ENCODE measurements at regions of chr4 and their contacts with region 1.

Region 1: DNA sequence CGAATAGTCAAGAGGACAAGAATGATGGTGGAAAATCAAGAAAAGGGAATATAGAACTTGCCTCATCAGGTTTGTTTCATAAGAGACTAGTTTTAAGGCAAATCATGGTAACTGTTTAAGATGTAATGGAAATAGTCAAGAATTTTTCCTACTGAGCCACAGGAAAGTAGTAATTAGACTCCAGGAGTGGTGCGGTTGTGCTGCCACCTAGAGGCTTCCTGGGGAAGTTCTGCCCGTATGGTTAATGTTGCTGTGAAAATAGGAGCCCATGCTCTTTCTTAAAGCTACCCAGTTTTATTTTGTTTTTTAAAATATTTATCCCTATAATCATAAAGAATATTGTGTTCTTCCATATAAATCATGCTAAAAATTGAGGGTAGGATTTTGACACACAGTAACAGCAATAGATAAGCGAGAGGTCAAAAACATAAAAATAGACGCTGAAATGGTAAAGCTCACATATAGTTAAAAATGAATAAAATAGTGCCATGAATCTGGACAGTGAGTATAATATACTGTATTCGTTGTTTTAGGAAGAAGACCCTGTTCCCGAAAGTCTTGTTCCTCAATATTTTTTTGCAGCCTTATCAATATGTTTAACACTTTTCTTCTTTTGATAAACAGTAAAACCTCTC is 87.0 kb downstream of the PHOX2B start:
- DNase-seq: peak; percentile 51 to 86 (median 69)
- ATAC-seq: peak; percentile 64 to 65
- H3K4me3 ChIP-seq: no peak overlapping the region
- H3K27ac ChIP-seq: no peak overlapping the region
- H3K4me1 ChIP-seq: peaks cover 6% of the 10 kb centered on the region
- H3K27me3 ChIP-seq: no peaks in the 10 kb centered on the region

Region 2: GRCh38 chr4:41281038-41281634 is 380.4 kb before region 1 on chr4:
- intact Hi-C with region 1: loop called (anchors 2 to 5 kb)
- DNase-seq: no peak
- ATAC-seq: peak; percentile 96
- H3K4me3 ChIP-seq: no peak overlapping the region
- H3K27ac ChIP-seq: no peak overlapping the region
- H3K4me1 ChIP-seq: no peaks in the 10 kb centered on the region
- H3K27me3 ChIP-seq: no peaks in the 10 kb centered on the region

Region 3: GRCh38 chr4:41505161-41505661 is 156.3 kb before region 1 on chr4:
- intact Hi-C with region 1: no loop called
- DNase-seq: peak in 1 of 3 donors; percentile 45
- ATAC-seq: peak; percentile 40 to 77
- H3K4me3 ChIP-seq: no peak overlapping the region
- H3K27ac ChIP-seq: no peak overlapping the region
- H3K4me1 ChIP-seq: peaks cover 7% of the 10 kb centered on the region
- H3K27me3 ChIP-seq: no peaks in the 10 kb centered on the region

Region 4: DNA sequence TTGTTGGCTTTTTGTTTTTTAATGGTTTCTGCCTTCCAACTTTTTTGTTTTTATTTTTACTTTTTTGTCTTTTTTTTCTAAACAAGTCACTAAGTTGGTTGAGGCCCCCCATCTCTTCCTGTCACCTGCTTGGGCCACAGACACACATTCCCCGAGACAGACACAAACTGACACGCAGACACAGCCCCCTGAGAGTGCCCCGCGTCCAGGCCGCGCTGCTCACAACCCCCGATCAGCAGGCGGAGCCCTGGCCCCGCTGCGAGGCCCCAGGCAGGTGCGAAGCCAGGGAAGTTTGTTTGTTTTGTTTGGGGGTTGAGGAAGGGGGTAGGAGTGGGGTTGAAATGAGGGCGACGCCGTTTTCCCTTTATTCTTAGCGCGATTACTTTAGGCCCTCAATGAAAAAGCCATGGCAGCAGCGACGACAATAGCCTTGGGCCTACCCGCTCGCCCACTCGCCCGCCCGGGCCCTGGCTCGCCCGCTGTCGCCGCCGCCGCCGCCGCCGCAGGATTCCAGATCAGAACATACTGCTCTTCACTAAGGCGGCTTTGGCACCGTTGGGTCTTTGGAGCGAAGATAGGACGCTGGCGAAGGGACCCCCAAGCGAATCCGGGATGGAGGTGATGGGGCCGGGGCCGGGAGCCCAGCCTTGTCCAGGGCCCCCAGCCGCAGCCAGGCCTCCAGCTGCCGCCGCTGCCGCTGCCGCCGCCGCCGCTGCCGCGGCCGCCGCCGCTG is 83.9 kb after region 1 on chr4:
- intact Hi-C with region 1: no loop called
- DNase-seq: no peak
- ATAC-seq: no peak
- H3K4me3 ChIP-seq: peak overlapping the region; percentile 29
- H3K27ac ChIP-seq: no peak overlapping the region
- H3K4me1 ChIP-seq: peaks cover 3% of the 10 kb centered on the region
- H3K27me3 ChIP-seq: peaks cover 2% of the 10 kb centered on the region

Region 5: DNA sequence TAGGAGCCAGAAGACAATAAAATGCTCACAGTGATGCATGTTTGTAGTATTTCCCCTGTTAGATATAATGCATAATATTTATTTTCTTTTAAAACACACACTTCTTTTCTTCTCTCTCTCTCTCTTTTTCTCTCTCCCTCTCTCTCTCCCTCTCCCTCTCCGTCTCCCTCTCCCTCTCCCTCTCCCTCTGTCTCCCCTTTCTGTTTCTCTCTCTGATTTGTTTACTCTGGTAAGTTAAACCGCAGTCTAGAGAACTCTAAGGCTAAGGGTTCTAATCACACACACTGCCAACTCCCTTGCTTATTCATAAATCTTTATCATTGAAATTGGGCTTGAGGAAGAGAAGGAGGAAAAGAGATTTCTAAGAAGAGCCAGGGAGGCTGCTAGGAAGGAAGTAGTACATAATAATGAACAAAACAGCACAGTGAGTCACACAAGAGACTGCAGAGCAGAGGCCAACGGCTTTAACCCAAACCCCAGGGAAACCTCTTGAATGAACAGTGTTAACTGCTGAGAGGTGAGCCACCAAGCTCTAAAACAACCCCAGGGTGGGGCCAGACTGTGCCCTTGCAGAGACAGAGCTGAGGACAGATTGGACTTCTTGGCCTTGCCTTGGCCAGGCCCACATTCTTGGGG is 96.1 kb after region 1 on chr4:
- intact Hi-C with region 1: no loop called
- DNase-seq: peak in 1 of 3 donors; percentile 8
- ATAC-seq: no peak
- H3K4me3 ChIP-seq: no peak overlapping the region
- H3K27ac ChIP-seq: no peak overlapping the region
- H3K4me1 ChIP-seq: no peaks in the 10 kb centered on the region
- H3K27me3 ChIP-seq: peaks cover 6% of the 10 kb centered on the region

Region 6: GRCh38 chr4:41913509-41913908 is 251.9 kb after region 1 on chr4:
- intact Hi-C with region 1: no loop called
- DNase-seq: no peak
- ATAC-seq: no peak
- H3K4me3 ChIP-seq: no peak overlapping the region
- H3K27ac ChIP-seq: no peak overlapping the region
- H3K4me1 ChIP-seq: no peaks in the 10 kb centered on the region
- H3K27me3 ChIP-seq: no peaks in the 10 kb centered on the region